Endothelial cell of umbilical vein (primary cell): ENCODE measurements at regions of chr11 and their contacts with region 1.

Region 1: DNA sequence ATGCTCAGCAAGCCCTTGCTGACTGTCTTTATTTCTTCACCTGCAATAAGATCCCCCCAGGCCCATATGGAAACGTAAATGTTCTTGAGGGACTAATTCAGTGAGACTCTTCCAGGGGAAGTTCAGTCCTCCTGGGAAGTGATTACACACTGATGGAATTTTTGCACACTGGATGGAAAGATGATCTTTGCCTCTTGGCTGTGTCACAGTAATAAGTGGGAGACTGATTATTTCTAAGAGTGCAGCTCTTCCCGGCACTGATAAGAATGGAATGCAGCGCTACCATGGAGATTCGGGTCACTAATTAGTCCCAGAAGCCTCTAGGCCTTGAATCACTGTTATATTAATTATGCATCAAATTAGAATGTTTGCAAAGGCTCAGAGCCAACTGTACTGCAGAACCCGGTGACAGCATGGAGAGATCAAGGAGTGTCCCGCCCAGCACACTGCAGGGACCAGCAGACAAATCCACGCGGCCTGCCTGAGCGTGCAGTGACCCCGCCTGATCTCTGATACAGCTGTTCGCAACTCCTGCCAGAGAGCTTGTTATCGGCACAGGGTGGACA is 178.3 kb downstream of the SNX19 start:
- DNase-seq: peak; percentile 88
- H3K4me3 ChIP-seq: no peak overlapping the region
- H3K27ac ChIP-seq: peak overlapping the region; percentile 56
- H3K4me1 ChIP-seq: peaks cover 21% of the 10 kb centered on the region
- H3K27me3 ChIP-seq: no peaks in the 10 kb centered on the region
- CTCF ChIP-seq: no peak
- POLR2A ChIP-seq: no peak

Region 2: GRCh38 chr11:130522284-130522961 is 215.5 kb before region 1 on chr11:
- CTCF ChIA-PET with region 1: no interaction called
- POLR2A ChIA-PET with region 1: no interaction called
- dilution Hi-C with region 1: no loop called
- intact Hi-C with region 1: loop called (anchors 5 kb)
- DNase-seq: peak; percentile 83
- H3K4me3 ChIP-seq: no peak overlapping the region
- H3K27ac ChIP-seq: no peak overlapping the region
- H3K4me1 ChIP-seq: peaks cover 4% of the 10 kb centered on the region
- H3K27me3 ChIP-seq: no peaks in the 10 kb centered on the region
- CTCF ChIP-seq: no peak
- POLR2A ChIP-seq: no peak

Region 3: GRCh38 chr11:130646881-130647280 is 91.1 kb before region 1 on chr11:
- CTCF ChIA-PET with region 1: no interaction called
- POLR2A ChIA-PET with region 1: no interaction called
- dilution Hi-C with region 1: no loop called
- intact Hi-C with region 1: loop called (anchors 2 kb)
- DNase-seq: no peak
- H3K4me3 ChIP-seq: no peak overlapping the region
- H3K27ac ChIP-seq: no peak overlapping the region
- H3K4me1 ChIP-seq: peaks cover 3% of the 10 kb centered on the region
- H3K27me3 ChIP-seq: no peaks in the 10 kb centered on the region
- CTCF ChIP-seq: no peak
- POLR2A ChIP-seq: no peak

Region 4: GRCh38 chr11:130689222-130689908 is 48.6 kb before region 1 on chr11:
- CTCF ChIA-PET with region 1: no interaction called
- POLR2A ChIA-PET with region 1: no interaction called
- dilution Hi-C with region 1: no loop called
- intact Hi-C with region 1: no loop called
- DNase-seq: no peak
- H3K4me3 ChIP-seq: no peak overlapping the region
- H3K27ac ChIP-seq: no peak overlapping the region
- H3K4me1 ChIP-seq: no peaks in the 10 kb centered on the region
- H3K27me3 ChIP-seq: no peaks in the 10 kb centered on the region
- CTCF ChIP-seq: no peak
- POLR2A ChIP-seq: no peak

Region 5: DNA sequence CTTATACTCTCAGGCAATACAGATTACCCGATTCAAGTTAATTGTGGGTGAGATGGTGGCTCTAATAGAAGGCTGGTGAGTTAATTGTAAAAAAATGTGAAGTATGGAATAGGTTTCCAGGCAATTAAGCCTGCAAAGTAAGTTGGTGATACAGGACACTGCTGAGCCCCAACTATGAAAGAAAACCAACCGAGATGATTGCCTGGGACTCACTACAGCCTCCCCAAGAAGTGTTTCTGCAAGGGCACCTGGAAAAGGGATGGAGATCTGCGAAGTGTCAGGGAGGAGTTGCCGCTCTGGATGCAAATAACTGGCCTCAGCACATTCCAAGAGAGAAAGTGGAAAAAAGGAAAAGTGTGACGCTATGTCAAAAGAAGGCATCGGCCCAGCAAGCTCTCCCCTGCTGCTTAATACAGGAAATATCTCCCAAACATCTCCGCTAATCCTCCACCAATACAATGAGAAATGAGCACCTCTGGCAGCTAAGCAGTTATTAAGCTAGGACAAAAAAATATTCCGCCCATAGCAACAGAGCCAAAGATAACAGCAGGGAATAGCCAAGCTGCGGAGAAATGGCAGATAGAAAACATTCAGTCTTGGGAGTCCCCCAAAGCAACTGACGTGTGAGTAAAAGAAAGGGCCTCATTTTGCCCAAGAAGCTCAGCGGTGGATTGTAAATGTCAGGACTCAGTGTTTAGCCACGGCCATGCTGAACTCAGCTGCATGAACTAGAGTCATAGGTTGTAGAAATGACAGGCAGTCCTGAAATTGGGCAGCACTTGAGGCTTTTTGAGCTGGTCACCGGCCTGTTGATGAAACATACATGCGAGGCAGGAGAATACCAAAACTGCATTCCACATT is 44.6 kb after region 1 on chr11:
- CTCF ChIA-PET with region 1: no interaction called
- POLR2A ChIA-PET with region 1: no interaction called
- dilution Hi-C with region 1: no loop called
- intact Hi-C with region 1: loop called (anchors 1 kb)
- DNase-seq: peak; percentile 66
- H3K4me3 ChIP-seq: no peak overlapping the region
- H3K27ac ChIP-seq: peak overlapping the region; percentile 23
- H3K4me1 ChIP-seq: peaks cover 23% of the 10 kb centered on the region
- H3K27me3 ChIP-seq: no peaks in the 10 kb centered on the region
- CTCF ChIP-seq: no peak
- POLR2A ChIP-seq: no peak

Region 6: DNA sequence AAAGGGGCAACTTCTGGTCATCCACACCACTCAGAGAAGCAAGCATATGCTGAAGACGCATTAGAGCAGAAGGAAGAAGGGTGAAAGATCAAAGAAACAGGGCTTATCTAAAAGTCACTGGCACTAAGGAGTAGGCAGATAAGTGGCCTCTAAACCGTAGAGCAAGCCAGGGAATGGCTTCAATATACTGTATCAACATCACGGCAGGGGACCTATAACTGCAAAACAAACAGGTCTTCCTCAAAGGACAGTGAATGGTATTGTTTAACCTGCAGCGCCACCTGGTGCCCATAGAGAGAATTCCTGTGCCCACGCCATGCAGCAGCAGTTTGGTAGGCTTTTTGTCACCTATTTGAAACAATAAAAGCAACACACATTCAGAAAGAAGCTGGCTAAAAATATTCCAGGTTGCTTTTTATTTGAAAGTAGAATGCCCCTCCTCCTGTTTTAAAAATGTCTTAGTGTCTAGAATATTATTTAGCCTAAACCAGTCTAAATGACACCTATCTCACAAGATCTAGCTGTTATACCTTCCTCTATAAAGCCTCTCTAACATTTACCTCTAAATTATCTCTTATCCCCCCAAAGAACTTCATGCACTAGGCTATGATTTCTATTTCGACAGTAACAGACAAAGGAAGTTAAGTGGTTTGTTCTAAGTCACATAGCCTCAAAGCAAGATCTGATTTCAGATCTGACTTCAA is 156.5 kb after region 1 on chr11:
- CTCF ChIA-PET with region 1: no interaction called
- POLR2A ChIA-PET with region 1: no interaction called
- dilution Hi-C with region 1: no loop called
- intact Hi-C with region 1: loop called (anchors 1 kb)
- DNase-seq: peak; percentile 90
- H3K4me3 ChIP-seq: no peak overlapping the region
- H3K27ac ChIP-seq: peak overlapping the region; percentile 13
- H3K4me1 ChIP-seq: peaks cover 57% of the 10 kb centered on the region
- H3K27me3 ChIP-seq: no peaks in the 10 kb centered on the region
- CTCF ChIP-seq: peak; percentile 72 to 86
- POLR2A ChIP-seq: no peak

Region 7: GRCh38 chr11:130905512-130905911 is 167.6 kb after region 1 on chr11:
- CTCF ChIA-PET with region 1: no interaction called
- POLR2A ChIA-PET with region 1: no interaction called
- dilution Hi-C with region 1: no loop called
- intact Hi-C with region 1: no loop called
- DNase-seq: no peak
- H3K4me3 ChIP-seq: no peak overlapping the region
- H3K27ac ChIP-seq: peak overlapping the region; percentile 49
- H3K4me1 ChIP-seq: peaks cover 49% of the 10 kb centered on the region
- H3K27me3 ChIP-seq: no peaks in the 10 kb centered on the region
- CTCF ChIP-seq: no peak
- POLR2A ChIP-seq: no peak

Region 8: DNA sequence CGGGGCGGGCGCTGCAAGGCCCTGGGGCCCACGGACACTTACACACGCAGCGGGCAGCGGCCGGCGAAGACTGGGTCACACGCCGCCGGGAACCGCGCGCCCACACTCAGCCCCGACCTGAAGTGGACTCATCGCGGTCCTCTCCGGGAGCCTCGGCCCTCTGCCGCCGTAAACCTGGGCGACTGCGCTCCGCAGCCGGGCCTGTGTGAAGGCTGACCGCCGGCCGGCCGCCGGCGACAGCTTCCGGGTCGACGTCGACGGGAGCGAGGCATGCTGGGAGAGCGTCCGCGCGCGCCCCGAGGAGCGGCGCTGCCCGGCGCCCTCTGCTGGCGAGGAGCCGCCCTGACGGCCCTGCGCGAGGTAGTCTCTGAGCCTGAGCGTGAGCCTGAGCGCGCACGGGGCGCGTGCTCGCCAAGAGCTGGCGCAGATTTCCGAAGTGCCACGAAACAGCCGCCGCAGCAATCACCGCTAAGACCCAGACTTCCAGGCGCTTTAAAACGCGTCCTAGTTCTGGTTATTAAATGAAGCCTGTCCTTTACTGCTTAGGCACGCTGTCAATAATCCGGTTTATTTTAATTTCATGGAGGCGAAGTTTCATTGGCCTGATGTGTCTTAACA is 178.4 kb after region 1 on chr11 and contains the start of gene SNX19:
- CTCF ChIA-PET with region 1: no interaction called
- POLR2A ChIA-PET with region 1: no interaction called
- dilution Hi-C with region 1: no loop called
- intact Hi-C with region 1: no loop called
- DNase-seq: peak; percentile 92
- H3K4me3 ChIP-seq: peak within 1 kb of the TSS; percentile 34 to 87 (median 51)
- H3K27ac ChIP-seq: peak within 1 kb of the TSS; percentile 76
- H3K4me1 ChIP-seq: peaks cover 12% of the 10 kb centered on the region
- H3K27me3 ChIP-seq: peaks cover 3 to 4% of the 10 kb centered on the region in 2 experiments
- CTCF ChIP-seq: peak; percentile 91 to 97
- POLR2A ChIP-seq: peak; percentile 89
- total RNA-seq, gene SNX19: 44.3 and 49.8 TPM in 2 replicates

Region 9: DNA sequence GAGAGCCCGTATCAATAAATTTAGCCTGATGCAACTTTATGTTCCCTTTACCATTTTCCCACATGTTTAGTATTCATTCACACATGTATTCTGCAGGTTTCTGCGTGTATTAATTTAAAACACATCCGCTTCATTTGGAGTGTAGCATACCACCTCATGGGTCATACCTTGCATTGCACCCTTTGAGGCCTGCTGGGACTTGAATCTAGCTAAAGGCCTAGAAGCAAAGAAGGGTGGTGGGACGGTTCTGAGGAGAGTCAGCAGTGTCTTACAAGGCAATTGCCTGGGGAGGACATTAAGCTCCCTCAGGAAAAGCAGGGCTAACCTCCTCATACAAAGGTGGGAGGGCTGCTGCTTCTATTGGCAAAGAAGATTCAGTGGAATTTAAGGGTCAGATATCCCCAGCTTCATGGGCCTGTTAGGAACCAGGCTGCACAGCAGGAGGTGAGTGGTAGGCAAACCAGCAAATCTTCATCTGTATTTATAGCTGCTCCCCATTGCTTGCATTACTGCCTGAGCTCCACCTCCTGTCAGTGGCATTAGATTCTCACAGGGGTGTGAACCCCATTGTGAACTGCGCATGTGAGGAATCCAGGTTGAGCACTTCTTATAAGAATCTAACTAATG is 194.2 kb after region 1 on chr11:
- CTCF ChIA-PET with region 1: no interaction called
- POLR2A ChIA-PET with region 1: no interaction called
- dilution Hi-C with region 1: no loop called
- intact Hi-C with region 1: no loop called
- DNase-seq: no peak
- H3K4me3 ChIP-seq: no peak overlapping the region
- H3K27ac ChIP-seq: no peak overlapping the region
- H3K4me1 ChIP-seq: no peaks in the 10 kb centered on the region
- H3K27me3 ChIP-seq: no peaks in the 10 kb centered on the region
- CTCF ChIP-seq: no peak
- POLR2A ChIP-seq: no peak